BJ (cell line): ENCODE measurements at regions of chr5 and their contacts with region 1.

Region 1: GRCh38 chr5:32092938-32093812 is 80.9 kb downstream of the GOLPH3 start:
- DNase-seq: no peak
- H3K4me3 ChIP-seq: no peak overlapping the region
- H3K27me3 ChIP-seq: no peaks in the 10 kb centered on the region
- CTCF ChIP-seq: peak; percentile 72

Region 2: DNA sequence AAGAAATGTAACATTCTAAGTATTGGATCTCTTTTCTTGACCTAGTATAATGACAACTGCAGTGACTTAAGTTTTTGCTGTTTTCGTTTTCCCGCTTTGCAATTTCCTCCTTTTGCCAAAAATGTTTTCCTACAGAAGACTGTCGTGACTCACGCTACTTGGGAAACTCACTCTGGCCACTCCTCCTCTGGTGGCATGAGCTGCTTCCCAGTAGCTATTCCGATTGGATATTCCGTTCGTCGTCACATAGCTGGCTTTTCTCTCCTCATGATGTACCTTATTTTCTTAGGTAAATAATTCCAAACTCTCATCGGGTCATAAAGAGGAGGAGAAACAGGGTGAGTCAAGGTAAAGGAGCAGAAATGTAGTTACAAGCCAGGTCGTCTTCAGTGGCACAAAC is 16.1 kb after region 1 on chr5:
- CTCF ChIA-PET with region 1: interaction called, 13 read pairs
- POLR2A ChIA-PET with region 1: no interaction called
- DNase-seq: no peak
- H3K4me3 ChIP-seq: no peak overlapping the region
- H3K27me3 ChIP-seq: no peaks in the 10 kb centered on the region
- CTCF ChIP-seq: no peak

Region 3: DNA sequence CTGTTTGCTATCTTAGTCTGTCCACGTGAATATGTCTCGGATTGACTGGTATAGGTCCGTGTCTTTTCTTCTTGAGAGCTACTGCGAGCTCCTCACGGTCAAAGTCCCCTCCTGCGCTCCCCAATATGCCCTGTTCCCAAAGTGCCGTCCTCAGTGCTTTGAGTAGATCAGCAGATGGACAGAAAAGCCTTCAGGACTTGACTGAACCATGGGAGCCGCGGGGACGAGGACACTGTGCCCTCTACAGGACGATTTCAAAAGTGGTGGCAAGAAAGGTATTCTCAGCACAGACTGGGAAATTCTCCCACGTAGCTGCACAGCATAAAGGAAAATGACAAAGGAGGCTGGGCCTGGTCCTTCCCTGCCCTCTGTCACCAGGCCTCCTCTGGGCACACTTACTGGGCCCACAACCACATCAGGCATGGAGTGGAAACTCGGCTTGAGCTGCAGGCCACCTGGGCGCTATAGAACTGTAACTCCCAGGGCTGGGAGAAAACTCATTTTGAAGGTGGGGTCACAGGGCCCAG is 236.2 kb after region 1 on chr5:
- CTCF ChIA-PET with region 1: interaction called, 12 read pairs
- POLR2A ChIA-PET with region 1: no interaction called
- DNase-seq: no peak
- H3K4me3 ChIP-seq: no peak overlapping the region
- H3K27me3 ChIP-seq: no peaks in the 10 kb centered on the region
- CTCF ChIP-seq: peak; percentile 80